Right ventricle myocardium inferior (tissue), 1 donor: ENCODE measurements at regions of chr2 and their contacts with region 1.

Region 1: DNA sequence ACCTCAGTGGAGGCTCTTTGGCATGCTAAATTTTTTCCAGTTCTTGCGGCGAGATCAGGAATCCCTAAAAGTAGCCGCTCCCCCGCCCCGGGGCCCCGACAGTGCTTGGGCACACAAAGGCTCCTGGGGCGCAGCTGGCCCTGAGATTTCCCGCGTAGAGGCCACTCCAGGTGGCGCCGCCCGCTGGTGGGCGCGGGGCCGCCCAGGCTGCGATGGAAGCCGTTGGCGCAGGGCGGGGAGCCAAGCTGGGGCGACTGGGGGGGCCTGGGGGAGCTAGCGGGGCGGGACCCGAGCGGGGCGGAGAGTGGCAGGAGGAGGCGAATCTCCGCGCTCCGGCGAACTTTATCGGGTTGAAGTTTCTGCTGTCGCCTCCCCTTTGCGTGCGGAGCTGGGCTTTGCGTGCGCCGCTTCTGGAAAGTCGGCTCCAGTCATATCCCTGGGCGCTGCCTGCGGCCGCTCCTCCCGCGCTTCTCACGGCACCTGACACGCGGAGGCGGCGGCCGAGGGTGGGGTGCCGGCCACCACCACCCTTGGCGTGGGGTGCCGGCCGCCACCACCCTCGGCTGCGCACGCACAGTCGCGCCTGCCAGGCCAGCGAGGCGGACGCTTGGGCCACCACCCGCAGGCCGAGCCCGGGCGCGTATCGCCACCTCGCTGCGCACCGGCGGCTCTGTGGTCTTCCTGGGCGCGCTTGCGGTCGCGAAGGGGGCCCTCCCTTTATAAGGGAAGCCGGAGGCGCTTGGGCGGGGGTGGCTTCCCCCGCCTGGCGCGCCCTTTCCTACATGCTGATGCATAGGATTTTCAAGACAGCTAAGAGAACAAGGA is 867 bp upstream of the CYP1B1 start:
- DNase-seq: peak; percentile 90
- ATAC-seq: peak; percentile 79

Region 2: GRCh38 chr2:38095996-38096861 is 19.4 kb after region 1 on chr2:
- intact Hi-C with region 1: loop called (anchors 1 kb)
- DNase-seq: peak; percentile 74
- ATAC-seq: peak; percentile 8

Region 3: DNA sequence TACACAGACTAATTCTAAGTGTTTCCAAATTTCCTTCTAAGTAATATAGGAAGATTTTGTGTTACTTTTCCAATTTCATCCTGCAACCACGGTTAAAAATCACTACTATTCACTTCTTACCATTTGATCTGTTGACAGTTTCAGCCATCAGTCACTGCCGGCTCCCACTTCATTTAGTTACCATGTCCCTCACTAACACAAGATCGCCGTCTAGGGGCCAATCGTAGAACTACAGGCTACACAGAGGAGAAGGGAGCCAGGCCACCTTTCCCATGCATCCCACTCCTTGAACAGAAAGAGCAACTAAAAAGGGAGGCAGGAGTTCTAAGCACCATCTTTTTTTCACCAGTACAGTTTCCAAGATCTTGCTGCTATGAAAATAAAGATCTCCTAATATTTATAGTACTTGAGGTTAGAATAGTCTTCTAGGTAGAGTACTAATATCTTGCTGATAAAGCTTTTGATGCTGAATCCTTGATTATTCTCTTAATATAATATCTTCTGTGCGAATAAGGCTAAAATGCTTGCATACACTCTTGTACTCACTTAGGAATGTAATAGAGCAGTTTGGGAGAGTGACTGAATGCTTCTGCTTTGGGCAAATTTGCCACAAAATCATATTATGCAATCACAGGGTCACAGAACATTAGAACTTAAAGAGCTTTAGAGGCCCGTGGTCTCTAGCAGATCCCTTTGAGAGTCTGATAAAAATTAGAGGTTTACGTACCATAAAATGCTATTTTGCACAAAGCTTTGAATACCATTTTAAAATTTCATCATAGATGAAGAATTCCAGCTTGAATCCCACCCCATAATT is 38.6 kb after region 1 on chr2:
- intact Hi-C with region 1: loop called (anchors 1 kb)
- DNase-seq: peak; percentile 81
- ATAC-seq: peak; percentile 66